ENCODE measurements at regions of chr1 and their contacts with region 1.

Region 1: GRCh38 chr1:156226116-156226538 is 13.3 kb downstream of the PMF1 start:
- DNase-seq: no peak
- H3K4me3 ChIP-seq: no peak overlapping the region
- H3K27ac ChIP-seq: no peak overlapping the region
- H3K4me1 ChIP-seq: peaks cover 0 to 22% (median 12%) of the 10 kb centered on the region in 4 experiments
- H3K27me3 ChIP-seq: no peaks in the 10 kb centered on the region

Region 2: GRCh38 chr1:156111355-156111962 is 114.7 kb before region 1 on chr1:
- CTCF ChIA-PET with region 1: no interaction called
- POLR2A ChIA-PET with region 1: no interaction called
- DNase-seq: no peak
- H3K4me3 ChIP-seq: no peak overlapping the region
- H3K27ac ChIP-seq: no peak overlapping the region
- H3K4me1 ChIP-seq: peaks cover 4 to 49% (median 46%) of the 10 kb centered on the region in 4 experiments
- H3K27me3 ChIP-seq: peaks cover 0 to 49% (median 24%) of the 10 kb centered on the region in 5 experiments

Region 3: GRCh38 chr1:156129706-156130581 is 96.2 kb before region 1 on chr1:
- CTCF ChIA-PET with region 1: interaction called, 399 read pairs
- POLR2A ChIA-PET with region 1: no interaction called
- DNase-seq: peak in 2 of 3 donors; percentile 67 to 73
- H3K4me3 ChIP-seq: no peak overlapping the region
- H3K27ac ChIP-seq: no peak overlapping the region
- H3K4me1 ChIP-seq: peaks cover 5 to 53% (median 48%) of the 10 kb centered on the region in 4 experiments
- H3K27me3 ChIP-seq: no peaks in the 10 kb centered on the region

Region 4: DNA sequence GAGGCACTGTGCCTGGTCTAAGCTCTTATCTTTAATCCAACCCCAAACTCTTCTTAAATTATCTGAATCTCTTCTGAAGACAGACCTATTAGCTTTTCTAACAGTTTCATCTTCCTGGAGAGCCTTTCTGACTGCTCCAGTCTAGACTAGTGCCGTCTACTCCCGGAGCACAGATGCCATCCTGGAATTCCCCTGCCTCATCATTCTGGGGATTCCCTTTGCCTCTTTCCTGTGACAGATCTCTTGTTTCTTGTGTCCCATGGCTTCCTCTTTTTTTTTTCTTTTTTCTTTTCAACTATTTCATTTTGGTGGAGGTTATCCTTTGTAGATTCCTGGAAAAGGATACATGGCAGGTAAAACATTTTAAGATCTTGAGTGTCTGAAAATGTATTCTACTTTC is 61.0 kb before region 1 on chr1:
- CTCF ChIA-PET with region 1: interaction called, 25 read pairs
- POLR2A ChIA-PET with region 1: no interaction called
- DNase-seq: peak in 1 of 3 donors; percentile 53
- H3K4me3 ChIP-seq: no peak overlapping the region
- H3K27ac ChIP-seq: no peak overlapping the region
- H3K4me1 ChIP-seq: peaks cover 0 to 14% (median 10%) of the 10 kb centered on the region in 4 experiments
- H3K27me3 ChIP-seq: no peaks in the 10 kb centered on the region

Region 5: DNA sequence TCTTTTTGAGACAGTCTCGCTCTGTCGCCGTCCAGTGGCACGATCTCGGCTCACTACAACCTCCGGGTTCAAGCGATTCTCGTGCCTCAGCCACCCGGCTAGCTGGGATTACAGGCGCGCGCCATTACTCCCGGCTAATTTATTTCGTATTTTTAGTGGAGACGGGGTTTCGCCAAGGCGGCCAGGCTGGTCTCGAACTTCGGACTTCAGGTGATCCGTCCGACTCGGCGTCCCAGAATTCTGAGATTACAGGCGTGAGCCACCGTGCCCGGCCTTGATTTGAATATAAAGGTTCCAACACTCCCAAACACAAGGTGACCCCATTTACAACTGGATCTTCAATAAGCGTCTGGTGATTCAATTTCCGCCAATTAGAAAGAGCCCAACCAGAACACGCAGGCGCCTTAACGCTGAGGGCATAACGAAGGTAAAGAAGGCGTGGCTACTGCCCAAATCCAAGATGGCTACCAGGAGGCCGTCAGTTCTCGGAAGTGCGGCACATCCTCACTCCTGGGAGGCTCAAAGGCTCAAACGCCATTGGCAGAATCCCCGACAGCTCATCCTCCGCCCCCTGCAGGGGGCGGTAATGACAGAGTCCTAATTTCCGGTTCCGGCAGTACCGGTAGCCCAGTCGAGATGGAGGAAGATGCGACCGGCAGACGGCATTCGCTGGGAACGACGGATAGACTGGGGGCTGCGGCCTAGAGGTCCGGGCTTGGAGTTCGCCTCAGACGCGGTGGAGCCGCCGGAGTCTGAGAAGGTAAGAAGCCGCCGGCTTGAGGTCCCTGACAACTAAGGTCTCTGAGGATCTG is 32.4 kb before region 1 on chr1 and contains the start of gene SLC25A44:
- CTCF ChIA-PET with region 1: interaction called, 11 read pairs
- POLR2A ChIA-PET with region 1: no interaction called
- DNase-seq: peak; percentile 99
- H3K4me3 ChIP-seq: peak within 1 kb of the TSS; percentile 87 to 98 (median 94)
- H3K27ac ChIP-seq: peak within 1 kb of the TSS; percentile 81 to 92
- H3K4me1 ChIP-seq: peaks cover 2 to 22% (median 15%) of the 10 kb centered on the region in 4 experiments
- H3K27me3 ChIP-seq: no peaks in the 10 kb centered on the region

Region 6: DNA sequence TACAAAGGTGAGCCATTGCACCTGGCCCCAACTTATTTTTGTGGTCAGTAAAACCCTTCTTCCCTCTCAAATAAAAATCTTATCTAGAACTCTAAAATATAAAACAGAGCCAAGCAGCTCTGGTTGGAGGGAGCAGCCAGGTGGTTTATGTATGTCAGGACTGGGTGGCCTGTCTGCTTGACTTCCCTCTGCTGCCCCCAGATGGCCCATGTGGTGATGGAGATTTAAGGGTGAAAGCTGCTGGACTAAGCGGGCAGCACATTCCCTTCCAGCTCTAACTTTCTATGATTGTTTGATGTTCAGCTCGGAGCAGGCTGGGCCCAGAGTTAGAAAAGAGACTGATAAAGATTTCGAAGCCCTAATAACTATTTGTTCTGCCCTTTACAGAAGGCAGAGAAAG is 33.7 kb after region 1 on chr1:
- CTCF ChIA-PET with region 1: interaction called, 15 read pairs
- POLR2A ChIA-PET with region 1: no interaction called
- DNase-seq: peak; percentile 38 to 55 (median 50)
- H3K4me3 ChIP-seq: no peak overlapping the region
- H3K27ac ChIP-seq: no peak overlapping the region
- H3K4me1 ChIP-seq: peaks cover 10 to 48% (median 37%) of the 10 kb centered on the region in 4 experiments
- H3K27me3 ChIP-seq: no peaks in the 10 kb centered on the region

Region 7: GRCh38 chr1:156338180-156338973 is 112.2 kb after region 1 on chr1 and contains the starts of genes CCT3 and TSACC:
- CTCF ChIA-PET with region 1: no interaction called
- POLR2A ChIA-PET with region 1: no interaction called
- DNase-seq: peak; percentile 100
- H3K4me3 ChIP-seq: peak within 1 kb of the TSS; percentile 73 to 98 (median 92)
- H3K27ac ChIP-seq: peak within 1 kb of the TSS; percentile 50 to 86
- H3K4me1 ChIP-seq: peaks cover 6 to 22% (median 17%) of the 10 kb centered on the region in 4 experiments
- H3K27me3 ChIP-seq: no peaks in the 10 kb centered on the region

Region 8: GRCh38 chr1:156451505-156452160 is 225.5 kb after region 1 on chr1:
- CTCF ChIA-PET with region 1: no interaction called
- POLR2A ChIA-PET with region 1: no interaction called
- DNase-seq: no peak
- H3K4me3 ChIP-seq: no peak overlapping the region
- H3K27ac ChIP-seq: no peak overlapping the region
- H3K4me1 ChIP-seq: peaks cover 3 to 15% (median 6%) of the 10 kb centered on the region in 4 experiments
- H3K27me3 ChIP-seq: peaks cover 0 to 8% (median 0%) of the 10 kb centered on the region in 5 experiments